Colonic mucosa (tissue), 4 donors: ENCODE measurements at regions of chr13 and their contacts with region 1.

Region 1: DNA sequence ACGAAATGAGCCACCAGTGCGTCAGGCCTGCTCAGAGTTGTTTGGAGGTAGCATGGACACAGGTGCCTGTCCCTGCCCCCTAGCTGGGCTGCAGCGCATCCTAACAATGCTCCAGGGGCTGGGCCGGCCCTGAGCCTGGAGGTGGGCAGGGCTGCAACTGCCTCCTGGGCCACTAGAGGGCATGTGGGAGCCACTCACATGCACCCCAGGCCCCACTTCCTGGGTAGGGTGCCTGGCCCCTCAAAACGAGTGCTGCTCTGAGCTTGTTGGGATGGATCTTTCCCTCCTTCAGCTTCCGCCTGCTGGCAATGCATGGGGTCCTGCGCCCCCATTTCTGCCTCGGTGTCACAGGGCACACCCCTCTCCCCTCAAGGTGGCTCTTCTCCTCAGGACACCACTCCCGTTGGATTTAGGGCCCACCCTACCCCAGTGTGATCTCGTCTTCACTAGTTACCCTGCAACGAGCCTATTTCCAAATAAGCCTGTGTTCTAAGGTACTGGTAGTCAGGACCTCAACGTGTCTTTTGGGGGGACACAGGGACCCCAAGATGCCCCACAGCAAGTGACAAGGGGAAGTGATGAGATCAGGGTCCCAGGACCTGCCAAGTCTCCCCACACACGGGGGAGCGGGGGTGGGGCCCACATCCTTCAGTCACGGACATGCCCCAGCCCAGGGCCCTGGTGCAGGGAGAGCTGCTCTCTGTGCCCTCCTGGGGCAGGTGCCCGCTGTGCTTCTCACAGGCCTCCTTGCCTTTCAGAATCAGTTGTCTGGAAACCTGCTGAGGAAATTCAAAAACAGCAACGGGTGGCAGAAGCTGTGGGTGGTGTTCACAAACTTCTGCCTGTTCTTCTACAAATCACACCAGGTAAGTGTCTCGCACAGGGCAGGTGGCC is 131.3 kb downstream of the STK24 start:
- DNase-seq: peak; percentile 72
- H3K4me3 ChIP-seq: no peak overlapping the region
- H3K27ac ChIP-seq: no peak overlapping the region
- H3K4me1 ChIP-seq: no peaks in the 10 kb centered on the region
- H3K27me3 ChIP-seq: no peaks in the 10 kb centered on the region
- CTCF ChIP-seq: peak; percentile 96

Region 2: GRCh38 chr13:98672944-98673545 is 227.5 kb after region 1 on chr13:
- intact Hi-C with region 1: loop called (anchors 5 kb)
- DNase-seq: peak; percentile 72
- H3K4me3 ChIP-seq: no peak overlapping the region
- H3K27ac ChIP-seq: no peak overlapping the region
- H3K4me1 ChIP-seq: no peaks in the 10 kb centered on the region
- H3K27me3 ChIP-seq: no peaks in the 10 kb centered on the region
- CTCF ChIP-seq: peak; percentile 87

Region 3: GRCh38 chr13:99366075-99366987 is 920.7 kb after region 1 on chr13:
- intact Hi-C with region 1: no loop called
- DNase-seq: no peak
- H3K4me3 ChIP-seq: no peak overlapping the region
- H3K27ac ChIP-seq: no peak overlapping the region
- H3K4me1 ChIP-seq: no peaks in the 10 kb centered on the region
- H3K27me3 ChIP-seq: no peaks in the 10 kb centered on the region
- CTCF ChIP-seq: no peak

Region 4: DNA sequence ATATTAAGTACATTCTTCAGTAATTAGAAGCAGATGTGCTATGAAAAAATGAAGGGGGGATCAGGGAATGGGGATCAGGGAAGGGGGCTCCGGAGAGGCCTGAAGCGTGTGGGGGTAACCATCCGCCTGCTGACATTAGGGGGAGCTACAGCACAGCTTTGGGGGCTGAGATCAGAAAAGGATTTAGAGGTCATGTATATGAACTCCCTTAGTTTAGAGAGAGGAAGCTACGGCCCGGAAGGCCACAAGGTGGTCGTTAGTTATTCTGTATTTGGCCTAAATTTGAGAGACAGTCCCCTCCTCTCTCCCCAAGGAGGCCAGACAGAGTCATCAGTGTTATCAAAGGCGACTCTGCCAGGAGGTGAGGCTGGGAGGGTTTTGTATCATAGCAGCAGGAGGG is 1154.7 kb after region 1 on chr13:
- intact Hi-C with region 1: no loop called
- DNase-seq: no peak
- H3K4me3 ChIP-seq: no peak overlapping the region
- H3K27ac ChIP-seq: no peak overlapping the region
- H3K4me1 ChIP-seq: no peaks in the 10 kb centered on the region
- H3K27me3 ChIP-seq: no peaks in the 10 kb centered on the region
- CTCF ChIP-seq: no peak